Sigmoid colon (tissue), 7 donors: ENCODE measurements at regions of chr4 and their contacts with region 1.

Region 1: GRCh38 chr4:109433205-109434006 is at the start of gene SEC24B:
- DNase-seq: peak; percentile 92
- H3K4me3 ChIP-seq: peak within 1 kb of the TSS; percentile 63 to 87 (median 80)
- H3K27ac ChIP-seq: peak within 1 kb of the TSS; percentile 87 to 94 (median 93)
- H3K4me1 ChIP-seq: peaks cover 0 to 50% (median 38%) of the 10 kb centered on the region in 4 donors
- H3K27me3 ChIP-seq: no peaks in the 10 kb centered on the region
- CTCF ChIP-seq: peak; percentile 10 to 93 (median 26)
- EP300 ChIP-seq: no peak
- POLR2A ChIP-seq: no peak
- total RNA-seq, gene SEC24B: 35.3 to 41.8 (median 40.0) TPM

Region 2: GRCh38 chr4:108620101-108620932 is 813.1 kb before region 1 on chr4 and contains the start of gene RPL34:
- intact Hi-C with region 1: loop called (anchors 10 kb)
- DNase-seq: peak; percentile 99
- H3K4me3 ChIP-seq: peak within 1 kb of the TSS; percentile 62 to 83 (median 70)
- H3K27ac ChIP-seq: peak within 1 kb of the TSS; percentile 80 to 90 (median 86)
- H3K4me1 ChIP-seq: peaks cover 0 to 33% (median 17%) of the 10 kb centered on the region in 4 donors
- H3K27me3 ChIP-seq: no peaks in the 10 kb centered on the region
- CTCF ChIP-seq: no peak
- EP300 ChIP-seq: peak in 2 of 4 donors; percentile 44 to 63
- POLR2A ChIP-seq: peak; percentile 96 to 97
- total RNA-seq, gene RPL34: 926 to 1,691 (median 1,619) TPM

Region 3: GRCh38 chr4:109472343-109472761 is 38.9 kb after region 1 on chr4:
- intact Hi-C with region 1: loop called (anchors 5 kb)
- DNase-seq: no peak
- H3K4me3 ChIP-seq: no peak overlapping the region
- H3K27ac ChIP-seq: no peak overlapping the region
- H3K4me1 ChIP-seq: peaks cover 0 to 51% (median 15%) of the 10 kb centered on the region in 4 donors
- H3K27me3 ChIP-seq: no peaks in the 10 kb centered on the region
- CTCF ChIP-seq: no peak
- EP300 ChIP-seq: no peak
- POLR2A ChIP-seq: no peak

Region 4: GRCh38 chr4:109511414-109511813 is 78.0 kb after region 1 on chr4:
- intact Hi-C with region 1: loop called (anchors 5 kb)
- DNase-seq: no peak
- H3K4me3 ChIP-seq: no peak overlapping the region
- H3K27ac ChIP-seq: no peak overlapping the region
- H3K4me1 ChIP-seq: no peaks in the 10 kb centered on the region
- H3K27me3 ChIP-seq: no peaks in the 10 kb centered on the region
- CTCF ChIP-seq: no peak
- EP300 ChIP-seq: no peak
- POLR2A ChIP-seq: no peak

Region 5: DNA sequence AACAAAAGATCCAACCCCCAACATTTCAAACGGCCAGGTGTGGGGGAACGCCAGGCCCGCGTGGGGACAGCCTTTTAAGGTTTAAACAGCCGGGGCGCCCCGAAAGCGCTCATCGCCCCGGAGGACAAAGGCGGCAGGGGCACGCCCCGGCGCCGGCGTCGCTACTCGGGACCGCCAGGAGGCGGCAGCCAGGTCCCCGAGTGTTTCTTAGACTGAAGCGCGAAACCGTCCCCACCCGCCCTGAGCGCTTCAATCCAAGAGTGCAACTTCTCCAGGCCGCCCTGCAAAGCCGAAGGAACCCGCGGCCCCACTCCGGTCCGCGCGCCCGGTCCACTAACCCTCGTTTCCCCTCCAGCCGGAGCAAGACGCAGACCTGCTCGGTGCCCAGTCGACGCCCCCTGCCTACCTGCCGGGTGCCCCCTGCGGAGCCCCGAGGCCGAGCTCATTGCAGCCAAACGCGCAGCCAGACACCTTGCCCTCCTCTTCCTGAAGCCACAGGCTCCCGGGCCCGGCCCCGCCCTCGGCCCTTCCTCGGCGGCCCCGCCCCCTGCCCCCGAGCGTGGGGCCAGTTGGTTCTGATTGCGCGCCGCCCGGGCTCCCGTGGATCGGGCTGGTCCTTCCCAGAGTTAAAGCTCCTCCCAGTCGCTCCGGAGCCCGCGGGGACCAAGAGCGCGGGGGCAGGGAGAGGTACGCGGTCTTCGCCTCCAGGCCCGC is 269.7 kb after region 1 on chr4 and contains the start of gene CASP6:
- intact Hi-C with region 1: loop called (anchors 5 kb)
- DNase-seq: peak; percentile 91
- H3K4me3 ChIP-seq: peak within 1 kb of the TSS; percentile 61 to 86 (median 74)
- H3K27ac ChIP-seq: peak within 1 kb of the TSS; percentile 85 to 90 (median 89)
- H3K4me1 ChIP-seq: peaks cover 0 to 20% (median 16%) of the 10 kb centered on the region in 4 donors
- H3K27me3 ChIP-seq: no peaks in the 10 kb centered on the region
- CTCF ChIP-seq: peak; percentile 35 to 78 (median 70)
- EP300 ChIP-seq: no peak
- POLR2A ChIP-seq: peak in 1 of 2 donors; percentile 55
- total RNA-seq, gene CASP6: 18.2 to 41.3 (median 26.8) TPM

Region 6: DNA sequence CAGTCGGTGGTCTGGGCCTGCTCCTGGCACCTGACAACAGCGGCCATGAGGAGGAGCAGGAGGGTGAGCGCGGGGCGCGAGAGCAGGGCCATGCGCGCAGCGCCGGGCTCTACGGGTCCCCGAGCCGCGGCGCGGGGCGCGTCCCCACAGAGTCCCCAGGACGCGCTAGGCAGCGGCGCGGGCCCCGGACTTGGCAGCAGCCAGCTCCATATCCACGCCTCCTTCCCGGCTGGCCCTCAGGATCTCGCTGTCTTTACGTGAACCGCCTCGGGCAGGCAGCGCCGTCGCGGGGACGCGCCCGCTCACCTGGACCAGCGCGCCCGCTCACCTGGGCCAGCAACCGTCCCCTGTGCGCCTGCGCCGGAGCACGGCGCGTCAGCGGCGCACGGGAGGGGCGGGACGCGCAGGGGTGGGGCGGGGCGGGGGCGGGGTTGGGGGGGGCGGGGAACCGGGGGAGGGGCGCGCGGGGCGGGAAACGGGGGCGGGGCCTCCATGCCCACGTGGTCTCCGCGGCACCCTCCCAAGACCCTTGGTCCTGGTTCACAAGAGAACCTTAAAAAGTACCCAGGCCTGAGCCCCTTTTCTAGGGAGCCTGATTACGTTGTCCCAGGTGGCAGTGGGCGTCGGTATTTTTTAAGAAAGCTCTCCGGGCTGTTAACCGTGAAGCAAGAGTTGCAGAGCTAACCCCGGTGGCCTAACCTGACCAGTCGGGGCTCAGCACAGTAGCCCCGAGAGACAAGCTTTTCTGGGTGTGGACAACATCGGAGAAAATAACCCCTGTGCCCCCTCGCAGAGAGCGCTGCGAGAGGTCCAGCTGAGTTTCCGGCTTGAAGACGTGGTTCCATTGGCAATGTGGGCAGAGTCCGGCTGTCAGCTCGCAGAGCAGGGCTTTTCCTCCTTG is 296.6 kb after region 1 on chr4 and contains the start of gene PLA2G12A:
- intact Hi-C with region 1: loop called (anchors 5 kb)
- DNase-seq: peak; percentile 82
- H3K4me3 ChIP-seq: peak within 1 kb of the TSS; percentile 57 to 96 (median 70)
- H3K27ac ChIP-seq: peak within 1 kb of the TSS; percentile 74 to 81 (median 78)
- H3K4me1 ChIP-seq: peaks cover 0 to 17% (median 10%) of the 10 kb centered on the region in 4 donors
- H3K27me3 ChIP-seq: no peaks in the 10 kb centered on the region
- CTCF ChIP-seq: no peak
- EP300 ChIP-seq: no peak
- POLR2A ChIP-seq: no peak
- total RNA-seq, gene PLA2G12A: 18.0 to 27.7 (median 23.0) TPM